ENCODE measurements at regions of chr1 and their contacts with region 1.

Region 1: DNA sequence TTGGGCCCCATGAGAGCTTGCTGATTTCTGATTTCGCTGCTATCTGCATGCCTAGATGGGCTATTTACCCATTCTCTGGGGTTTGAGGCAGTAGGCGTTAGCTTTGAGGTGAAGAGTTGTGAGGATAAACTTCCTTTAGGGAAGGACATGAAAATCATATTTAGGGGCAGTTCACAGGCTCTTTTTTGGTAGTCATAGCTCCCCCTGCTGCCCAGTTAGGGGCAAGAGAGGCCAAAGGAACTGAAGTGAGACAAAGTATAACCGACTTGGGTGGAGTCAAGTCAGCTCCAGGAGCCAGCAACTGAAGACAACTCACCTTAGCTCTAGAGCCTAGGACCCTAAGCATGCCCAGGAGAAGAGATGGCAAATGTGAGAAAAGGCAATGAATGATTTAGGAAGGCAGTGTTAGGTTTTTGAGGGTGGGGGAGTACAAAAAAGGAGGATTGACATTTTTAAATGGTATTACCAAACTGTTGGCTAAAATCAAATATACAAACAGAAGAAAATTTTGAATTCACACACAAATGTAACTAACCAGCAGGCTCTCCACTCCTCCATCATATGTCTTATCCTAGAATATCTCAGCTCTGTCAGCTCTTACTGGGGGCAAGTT is 625.2 kb downstream of the LMO4 start:
- DNase-seq: peak; percentile 80
- ATAC-seq: peak; percentile 82
- H3K4me3 ChIP-seq: no peak overlapping the region
- H3K4me3 Mint-ChIP-seq: no peak overlapping the region
- H3K27ac ChIP-seq: no peak overlapping the region
- H3K27ac Mint-ChIP-seq: no peak overlapping the region
- H3K4me1 ChIP-seq: peaks cover 16 to 17% of the 10 kb centered on the region in 2 donors
- H3K4me1 Mint-ChIP-seq: peaks cover 20% of the 10 kb centered on the region
- H3K27me3 ChIP-seq: no peaks in the 10 kb centered on the region
- H3K27me3 Mint-ChIP-seq: no peaks in the 10 kb centered on the region
- CTCF ChIP-seq: peak; percentile 89

Region 2: DNA sequence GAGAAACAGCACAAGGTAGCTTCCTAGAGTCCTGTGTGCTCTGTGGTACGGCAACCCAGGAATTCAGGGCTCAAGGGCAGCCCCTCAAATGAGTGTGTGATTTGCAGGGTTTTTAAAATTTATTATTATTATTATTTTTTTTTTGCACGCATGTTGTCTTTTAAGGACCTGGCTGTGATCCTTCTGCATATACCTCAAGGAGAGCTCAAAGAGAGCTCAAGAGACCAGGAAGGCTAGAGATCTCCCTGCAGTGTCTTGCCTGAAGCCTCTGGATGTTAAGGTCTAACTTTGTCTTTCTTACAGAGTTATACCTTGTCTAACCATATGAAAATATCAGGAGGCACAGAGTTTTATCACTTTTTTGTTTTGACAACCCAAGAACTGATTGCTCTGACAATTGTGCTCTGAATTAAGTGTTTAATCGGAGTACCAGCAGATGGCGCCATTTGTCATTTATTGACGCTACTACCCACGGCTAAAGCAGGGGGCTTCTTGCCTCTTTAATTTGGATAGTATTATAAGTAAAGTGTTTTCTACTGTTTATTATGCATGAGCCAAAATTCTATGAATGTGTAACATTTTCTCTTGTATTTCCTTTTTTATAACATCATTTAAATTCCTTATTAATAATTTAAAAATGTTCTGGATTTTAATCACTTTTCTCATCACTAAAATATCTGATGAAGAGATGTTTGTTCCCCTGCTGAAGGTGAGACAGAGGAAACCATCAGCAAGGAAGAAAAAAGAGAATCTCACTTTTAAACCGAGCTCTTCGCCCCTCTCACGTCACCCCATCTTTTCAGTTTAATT is 660.9 kb before region 1 on chr1:
- CTCF ChIA-PET with region 1: interaction called, 151 read pairs
- POLR2A ChIA-PET with region 1: no interaction called
- intact Hi-C with region 1: no loop called
- DNase-seq: peak; percentile 78
- ATAC-seq: peak; percentile 47
- H3K4me3 ChIP-seq: no peak overlapping the region
- H3K4me3 Mint-ChIP-seq: no peak overlapping the region
- H3K27ac ChIP-seq: no peak overlapping the region
- H3K27ac Mint-ChIP-seq: no peak overlapping the region
- H3K4me1 ChIP-seq: no peaks in the 10 kb centered on the region
- H3K4me1 Mint-ChIP-seq: no peaks in the 10 kb centered on the region
- H3K27me3 ChIP-seq: no peaks in the 10 kb centered on the region
- H3K27me3 Mint-ChIP-seq: peaks cover 13% of the 10 kb centered on the region
- CTCF ChIP-seq: peak; percentile 96

Region 3: GRCh38 chr1:87335175-87335884 is 618.5 kb before region 1 on chr1:
- CTCF ChIA-PET with region 1: interaction called, 150 read pairs
- POLR2A ChIA-PET with region 1: no interaction called
- intact Hi-C with region 1: no loop called
- DNase-seq: peak; percentile 79
- ATAC-seq: peak; percentile 63
- H3K4me3 ChIP-seq: peak overlapping the region; percentile 47 to 72 (median 66)
- H3K4me3 Mint-ChIP-seq: peak overlapping the region; percentile 83
- H3K27ac ChIP-seq: peak overlapping the region; percentile 46 to 82
- H3K27ac Mint-ChIP-seq: peak overlapping the region; percentile 94
- H3K4me1 ChIP-seq: peaks cover 46 to 49% of the 10 kb centered on the region in 2 donors
- H3K4me1 Mint-ChIP-seq: peaks cover 57% of the 10 kb centered on the region
- H3K27me3 ChIP-seq: no peaks in the 10 kb centered on the region
- H3K27me3 Mint-ChIP-seq: no peaks in the 10 kb centered on the region
- CTCF ChIP-seq: peak; percentile 42

Region 4: GRCh38 chr1:87812871-87813577 is 140.8 kb before region 1 on chr1:
- CTCF ChIA-PET with region 1: interaction called, 4 read pairs
- POLR2A ChIA-PET with region 1: no interaction called
- intact Hi-C with region 1: loop called (anchors 10 kb)
- DNase-seq: peak; percentile 43
- ATAC-seq: peak; percentile 72
- H3K4me3 ChIP-seq: peak overlapping the region in 1 of 5 experiments; percentile 4
- H3K4me3 Mint-ChIP-seq: no peak overlapping the region
- H3K27ac ChIP-seq: no peak overlapping the region
- H3K27ac Mint-ChIP-seq: no peak overlapping the region
- H3K4me1 ChIP-seq: peaks cover 16 to 18% of the 10 kb centered on the region in 2 donors
- H3K4me1 Mint-ChIP-seq: peaks cover 17% of the 10 kb centered on the region
- H3K27me3 ChIP-seq: no peaks in the 10 kb centered on the region
- H3K27me3 Mint-ChIP-seq: no peaks in the 10 kb centered on the region
- CTCF ChIP-seq: no peak

Region 5: GRCh38 chr1:87880747-87881133 is 73.1 kb before region 1 on chr1:
- CTCF ChIA-PET with region 1: no interaction called
- POLR2A ChIA-PET with region 1: no interaction called
- intact Hi-C with region 1: no loop called
- DNase-seq: no peak
- ATAC-seq: no peak
- H3K4me3 ChIP-seq: no peak overlapping the region
- H3K4me3 Mint-ChIP-seq: no peak overlapping the region
- H3K27ac ChIP-seq: no peak overlapping the region
- H3K27ac Mint-ChIP-seq: no peak overlapping the region
- H3K4me1 ChIP-seq: no peaks in the 10 kb centered on the region
- H3K4me1 Mint-ChIP-seq: no peaks in the 10 kb centered on the region
- H3K27me3 ChIP-seq: no peaks in the 10 kb centered on the region
- H3K27me3 Mint-ChIP-seq: no peaks in the 10 kb centered on the region
- CTCF ChIP-seq: no peak

Region 6: GRCh38 chr1:87942165-87942564 is 11.7 kb before region 1 on chr1:
- CTCF ChIA-PET with region 1: interaction called, 13 read pairs
- POLR2A ChIA-PET with region 1: no interaction called
- intact Hi-C with region 1: no loop called
- DNase-seq: no peak
- ATAC-seq: no peak
- H3K4me3 ChIP-seq: no peak overlapping the region
- H3K4me3 Mint-ChIP-seq: no peak overlapping the region
- H3K27ac ChIP-seq: no peak overlapping the region
- H3K27ac Mint-ChIP-seq: no peak overlapping the region
- H3K4me1 ChIP-seq: no peaks in the 10 kb centered on the region
- H3K4me1 Mint-ChIP-seq: no peaks in the 10 kb centered on the region
- H3K27me3 ChIP-seq: no peaks in the 10 kb centered on the region
- H3K27me3 Mint-ChIP-seq: no peaks in the 10 kb centered on the region
- CTCF ChIP-seq: no peak

Region 7: DNA sequence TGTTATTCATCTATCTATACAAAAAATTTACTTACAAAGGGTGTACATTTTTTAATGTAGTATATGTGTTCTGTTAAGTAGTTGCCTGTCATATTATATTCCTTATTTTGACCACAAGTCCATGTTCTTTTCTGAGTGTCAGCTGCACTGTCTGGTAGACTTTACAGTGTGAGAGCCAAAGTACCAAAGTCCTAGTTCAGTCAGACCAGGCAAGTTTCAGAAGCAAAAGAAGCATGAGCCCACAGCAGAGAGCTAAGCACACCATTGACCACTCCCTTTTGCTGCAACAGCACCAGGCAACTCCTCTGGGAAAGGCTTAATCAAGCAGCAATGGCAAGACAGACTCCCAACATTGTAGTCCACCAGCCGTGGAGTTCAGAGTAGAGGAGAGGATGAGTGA is 98.3 kb after region 1 on chr1:
- CTCF ChIA-PET with region 1: no interaction called
- POLR2A ChIA-PET with region 1: no interaction called
- intact Hi-C with region 1: no loop called
- DNase-seq: no peak
- ATAC-seq: no peak
- H3K4me3 ChIP-seq: no peak overlapping the region
- H3K4me3 Mint-ChIP-seq: no peak overlapping the region
- H3K27ac ChIP-seq: no peak overlapping the region
- H3K27ac Mint-ChIP-seq: no peak overlapping the region
- H3K4me1 ChIP-seq: no peaks in the 10 kb centered on the region
- H3K4me1 Mint-ChIP-seq: no peaks in the 10 kb centered on the region
- H3K27me3 ChIP-seq: no peaks in the 10 kb centered on the region
- H3K27me3 Mint-ChIP-seq: peaks cover 22% of the 10 kb centered on the region
- CTCF ChIP-seq: no peak

Measured in B cell (primary cell).